Aorta (tissue), 5 donors: ENCODE measurements at regions of chr17 and their contacts with region 1.

Region 1: GRCh38 chr17:42527273-42527703 is 8.8 kb upstream of the NAGLU start:
- DNase-seq: peak; percentile 80 to 85
- ATAC-seq: peak; percentile 85
- H3K4me3 ChIP-seq: no peak overlapping the region
- H3K27ac ChIP-seq: no peak overlapping the region
- H3K4me1 ChIP-seq: peaks cover 0 to 2% of the 10 kb centered on the region in 2 donors
- H3K27me3 ChIP-seq: no peaks in the 10 kb centered on the region

Region 2: GRCh38 chr17:42322382-42323267 is 204.7 kb before region 1 on chr17:
- intact Hi-C with region 1: loop called in 1 of 2 experiments (anchors 2 kb)
- DNase-seq: peak; percentile 94 to 97
- ATAC-seq: peak; percentile 90
- H3K4me3 ChIP-seq: no peak overlapping the region
- H3K27ac ChIP-seq: peak overlapping the region in 1 of 2 donors; percentile 4
- H3K4me1 ChIP-seq: no peaks in the 10 kb centered on the region
- H3K27me3 ChIP-seq: no peaks in the 10 kb centered on the region

Region 3: DNA sequence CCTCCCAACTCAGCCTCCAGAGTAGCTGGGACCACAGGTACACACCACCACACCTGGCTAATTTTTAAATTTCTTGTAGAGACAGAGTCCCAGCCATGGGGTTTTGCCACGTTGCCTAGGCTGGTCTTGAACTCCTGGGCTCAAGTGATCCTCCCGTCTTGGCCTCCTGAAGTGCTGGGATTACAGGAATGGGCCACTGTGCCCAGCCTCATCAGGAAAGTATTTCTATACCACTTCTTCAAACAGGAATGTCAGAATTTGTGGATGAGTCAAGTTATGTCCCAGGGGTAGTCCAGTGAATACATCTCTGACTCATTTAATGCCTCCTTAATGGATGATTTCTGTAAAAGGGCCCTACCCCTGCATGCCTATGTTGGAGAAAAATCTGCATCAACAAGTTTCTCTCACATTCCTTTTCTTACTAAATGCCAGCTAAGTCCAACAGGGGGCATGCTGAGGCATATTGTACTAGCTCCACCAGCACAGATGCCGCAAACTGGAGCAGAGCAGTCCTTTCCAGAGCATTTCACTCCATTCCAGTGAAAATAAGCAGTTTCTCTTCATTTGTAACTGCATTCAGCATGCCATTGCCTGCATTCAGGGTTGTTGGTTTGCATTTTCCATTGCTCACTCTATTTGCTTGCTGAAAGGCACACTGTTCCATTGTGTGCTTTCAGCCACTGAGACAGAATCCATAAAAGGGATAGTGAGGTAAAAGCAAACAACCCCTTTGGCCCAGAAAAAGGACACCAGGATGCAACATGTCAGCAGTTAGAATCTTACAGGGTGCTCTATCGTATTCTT is 98.9 kb before region 1 on chr17:
- intact Hi-C with region 1: loop called (anchors 1 to 5 kb)
- DNase-seq: peak in 1 of 2 donors; percentile 75
- ATAC-seq: peak; percentile 73
- H3K4me3 ChIP-seq: no peak overlapping the region
- H3K27ac ChIP-seq: peak overlapping the region in 1 of 2 donors; percentile 75
- H3K4me1 ChIP-seq: peaks cover 3% of the 10 kb centered on the region in 2 donors
- H3K27me3 ChIP-seq: no peaks in the 10 kb centered on the region

Region 4: GRCh38 chr17:42740699-42741098 is 213.4 kb after region 1 on chr17:
- intact Hi-C with region 1: no loop called
- DNase-seq: no peak
- ATAC-seq: no peak
- H3K4me3 ChIP-seq: no peak overlapping the region
- H3K27ac ChIP-seq: no peak overlapping the region
- H3K4me1 ChIP-seq: peaks cover 0 to 3% of the 10 kb centered on the region in 2 donors
- H3K27me3 ChIP-seq: no peaks in the 10 kb centered on the region